IMR-90 (cell line): ENCODE measurements at regions of chr5 and their contacts with region 1.

Region 1: GRCh38 chr5:151686674-151687407 is at the start of gene SPARC:
- DNase-seq: peak; percentile 96
- ATAC-seq: peak; percentile 85
- H3K4me3 ChIP-seq: peak within 1 kb of the TSS; percentile 84
- H3K27ac ChIP-seq: peak within 1 kb of the TSS; percentile 96
- H3K4me1 ChIP-seq: peaks cover 20% of the 10 kb centered on the region
- H3K27me3 ChIP-seq: no peaks in the 10 kb centered on the region
- CTCF ChIP-seq: no peak
- POLR2A ChIP-seq: peak; percentile 99
- RAD21 ChIP-seq: 0 out of 2 replicates have a peak, but pooled peaks have one; percentile 15
- total RNA-seq, gene SPARC: 1,186 and 1,450 TPM in 2 replicates

Region 2: GRCh38 chr5:151659001-151659754 is 27.7 kb before region 1 on chr5:
- CTCF ChIA-PET with region 1: interaction called, 8 read pairs
- POLR2A ChIA-PET with region 1: interaction called, 5 read pairs
- dilution Hi-C with region 1: no loop called
- in situ Hi-C with region 1: no loop called
- intact Hi-C with region 1: loop called (anchors 1 kb)
- DNase-seq: peak; percentile 80
- ATAC-seq: peak; percentile 74
- H3K4me3 ChIP-seq: no peak overlapping the region
- H3K27ac ChIP-seq: peak overlapping the region; percentile 82
- H3K4me1 ChIP-seq: peaks cover 17% of the 10 kb centered on the region
- H3K27me3 ChIP-seq: no peaks in the 10 kb centered on the region
- CTCF ChIP-seq: peak; percentile 93
- POLR2A ChIP-seq: peak; percentile 51
- RAD21 ChIP-seq: peak; percentile 95

Region 3: DNA sequence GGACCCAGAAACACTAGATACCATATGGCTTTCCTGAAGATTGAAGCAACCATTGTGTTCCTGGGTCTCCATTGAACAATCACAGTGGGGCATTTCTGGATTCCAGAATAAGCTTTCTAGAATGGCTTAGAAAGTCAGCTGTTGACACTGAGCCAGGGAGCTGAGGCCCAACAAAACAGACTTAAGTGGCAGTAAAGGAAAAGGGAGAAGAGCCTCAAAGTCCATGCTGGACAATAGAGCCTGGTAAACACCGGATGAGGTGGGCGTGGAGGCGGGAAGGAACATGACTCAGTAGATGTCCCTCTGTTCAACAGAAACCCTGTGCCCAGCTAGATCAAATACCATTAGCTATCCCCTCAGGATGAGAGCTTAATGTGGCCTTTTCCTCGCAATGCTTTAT is 14.9 kb before region 1 on chr5:
- CTCF ChIA-PET with region 1: interaction called, 4 read pairs
- POLR2A ChIA-PET with region 1: interaction called, 22 read pairs
- dilution Hi-C with region 1: no loop called
- in situ Hi-C with region 1: no loop called
- intact Hi-C with region 1: no loop called
- DNase-seq: peak; percentile 63
- ATAC-seq: peak; percentile 4; the same call in 1 of the 2 replicates
- H3K4me3 ChIP-seq: no peak overlapping the region
- H3K27ac ChIP-seq: peak overlapping the region; percentile 71
- H3K4me1 ChIP-seq: peaks cover 51% of the 10 kb centered on the region
- H3K27me3 ChIP-seq: no peaks in the 10 kb centered on the region
- CTCF ChIP-seq: no peak
- POLR2A ChIP-seq: no peak
- RAD21 ChIP-seq: no peak

Region 4: GRCh38 chr5:151699071-151699901 is 12.4 kb after region 1 on chr5:
- CTCF ChIA-PET with region 1: interaction called, 5 read pairs
- POLR2A ChIA-PET with region 1: interaction called, 61 read pairs
- dilution Hi-C with region 1: no loop called
- in situ Hi-C with region 1: no loop called
- intact Hi-C with region 1: loop called (anchors 1 kb)
- DNase-seq: peak; percentile 99
- ATAC-seq: peak; percentile 84
- H3K4me3 ChIP-seq: no peak overlapping the region
- H3K27ac ChIP-seq: peak overlapping the region; percentile 92
- H3K4me1 ChIP-seq: peaks cover 35% of the 10 kb centered on the region
- H3K27me3 ChIP-seq: no peaks in the 10 kb centered on the region
- CTCF ChIP-seq: 0 out of 2 replicates have a peak, but pooled peaks have one; percentile 5
- POLR2A ChIP-seq: peak; percentile 78
- RAD21 ChIP-seq: peak; percentile 6; the same call in 1 of the 2 replicates

Region 5: DNA sequence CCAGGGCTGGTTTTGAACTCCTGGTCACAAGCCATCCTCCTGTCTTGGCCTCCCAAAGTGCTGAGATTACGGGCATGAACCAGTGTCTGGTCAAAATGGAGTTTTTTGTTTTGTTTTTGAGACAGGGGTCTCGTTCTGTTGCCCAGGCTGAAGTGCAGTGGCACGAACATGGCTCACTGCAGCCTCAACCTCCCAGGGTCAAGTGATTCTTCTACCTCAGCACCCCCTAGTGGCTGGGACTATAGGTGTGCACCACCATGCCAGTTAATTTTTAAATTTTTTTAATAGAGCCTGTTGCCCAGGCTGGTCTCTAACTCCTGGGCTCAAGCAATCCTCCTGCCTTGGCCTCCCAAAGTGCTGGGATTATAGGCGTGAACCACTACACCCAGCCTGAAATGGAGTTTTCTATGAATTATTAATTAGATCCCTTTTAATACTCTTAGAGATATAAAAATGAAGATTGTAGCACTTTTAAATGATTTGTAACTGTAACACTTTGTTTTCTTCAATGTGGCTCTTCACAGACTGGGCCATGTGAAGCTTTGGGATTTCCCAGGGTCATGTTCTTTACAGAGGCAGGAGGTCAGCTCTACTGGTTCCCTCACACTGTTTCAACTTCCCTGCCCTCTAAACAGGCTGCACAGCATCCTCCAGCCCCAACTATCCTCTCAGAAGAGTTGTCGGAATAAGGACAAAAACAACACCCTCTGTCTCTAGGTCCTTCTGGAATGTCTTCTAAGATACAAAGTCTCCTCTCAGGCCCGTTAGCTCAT is 32.6 kb after region 1 on chr5:
- CTCF ChIA-PET with region 1: interaction called, 12 read pairs
- POLR2A ChIA-PET with region 1: interaction called, 20 read pairs
- dilution Hi-C with region 1: no loop called
- in situ Hi-C with region 1: no loop called
- intact Hi-C with region 1: loop called (anchors 1 kb)
- DNase-seq: peak; percentile 50
- ATAC-seq: peak; percentile 56
- H3K4me3 ChIP-seq: no peak overlapping the region
- H3K27ac ChIP-seq: peak overlapping the region; percentile 88
- H3K4me1 ChIP-seq: peaks cover 16% of the 10 kb centered on the region
- H3K27me3 ChIP-seq: no peaks in the 10 kb centered on the region
- CTCF ChIP-seq: peak; percentile 64
- POLR2A ChIP-seq: no peak
- RAD21 ChIP-seq: peak; percentile 68